Right ventricle myocardium superior (tissue), 1 donor: ENCODE measurements at regions of chr12 and their contacts with region 1.

Region 1: DNA sequence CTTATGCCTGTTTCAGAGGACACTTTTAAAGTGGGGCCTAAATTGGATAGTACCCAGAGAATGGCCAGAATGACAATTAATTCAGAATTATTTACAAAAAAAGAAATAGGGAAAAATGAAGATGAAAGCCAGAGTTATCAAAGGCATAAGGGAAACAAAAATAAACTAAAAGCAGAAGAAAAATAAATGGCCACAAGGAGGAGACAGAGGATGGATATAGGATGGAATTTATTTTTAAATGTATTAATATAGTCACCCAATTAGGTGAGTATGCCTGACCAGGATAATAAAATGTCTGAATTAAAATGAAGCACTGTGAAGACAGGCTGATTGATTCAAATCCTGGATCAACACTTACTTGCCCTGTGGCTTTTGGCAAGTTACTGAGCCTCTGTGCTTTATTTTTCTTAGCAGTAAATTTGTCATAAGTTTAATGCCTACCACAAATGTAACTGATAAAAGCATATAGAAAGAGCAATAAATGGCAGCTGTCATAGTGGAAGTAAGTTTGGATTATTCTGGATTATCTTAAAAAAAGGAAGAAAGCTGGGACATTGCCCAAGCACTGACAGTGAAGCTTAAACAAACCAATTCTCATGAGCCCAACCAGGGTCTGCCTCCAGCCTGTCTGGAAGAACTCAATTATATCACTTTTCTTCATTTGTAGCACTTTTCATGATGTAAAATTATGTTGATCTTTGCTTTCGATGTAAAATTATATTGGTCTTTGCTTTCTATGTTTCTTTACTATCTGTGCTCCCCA is 3.5 kb downstream of the CLEC9A start:
- DNase-seq: no peak
- ATAC-seq: no peak

Region 2: DNA sequence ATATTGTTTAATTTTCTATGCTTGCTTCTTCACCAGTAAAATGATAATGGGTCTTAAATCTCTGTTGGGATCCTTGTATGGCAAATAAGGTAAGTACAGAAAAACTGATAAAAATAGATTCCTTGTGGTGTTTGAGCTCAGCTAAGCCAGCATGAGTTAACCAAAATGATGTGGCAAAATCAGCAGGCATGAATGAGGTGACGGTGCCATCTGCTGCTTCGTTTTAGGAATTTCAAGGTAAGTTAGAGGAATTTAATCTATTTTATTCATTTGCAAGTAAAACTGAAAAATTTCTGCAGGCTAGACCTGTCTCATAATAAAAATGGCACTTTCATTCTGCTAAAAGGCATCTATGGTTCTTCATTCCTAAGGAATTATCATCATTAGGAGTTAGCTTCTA is 106.0 kb after region 1 on chr12:
- intact Hi-C with region 1: loop called (anchors 5 kb)
- DNase-seq: no peak
- ATAC-seq: peak; percentile 74

Region 3: GRCh38 chr12:10151621-10152020 is 117.7 kb after region 1 on chr12:
- intact Hi-C with region 1: no loop called
- DNase-seq: no peak
- ATAC-seq: no peak